Activated CD8-positive, alpha-beta T cell treated with anti-CD3 and anti-CD28 coated beads, Interleukin-2, amount 10 ng/mL, durations not matched to agents 7 days and 5 days (primary cell): ENCODE measurements at regions of chr1 and their contacts with region 1.

Region 1: DNA sequence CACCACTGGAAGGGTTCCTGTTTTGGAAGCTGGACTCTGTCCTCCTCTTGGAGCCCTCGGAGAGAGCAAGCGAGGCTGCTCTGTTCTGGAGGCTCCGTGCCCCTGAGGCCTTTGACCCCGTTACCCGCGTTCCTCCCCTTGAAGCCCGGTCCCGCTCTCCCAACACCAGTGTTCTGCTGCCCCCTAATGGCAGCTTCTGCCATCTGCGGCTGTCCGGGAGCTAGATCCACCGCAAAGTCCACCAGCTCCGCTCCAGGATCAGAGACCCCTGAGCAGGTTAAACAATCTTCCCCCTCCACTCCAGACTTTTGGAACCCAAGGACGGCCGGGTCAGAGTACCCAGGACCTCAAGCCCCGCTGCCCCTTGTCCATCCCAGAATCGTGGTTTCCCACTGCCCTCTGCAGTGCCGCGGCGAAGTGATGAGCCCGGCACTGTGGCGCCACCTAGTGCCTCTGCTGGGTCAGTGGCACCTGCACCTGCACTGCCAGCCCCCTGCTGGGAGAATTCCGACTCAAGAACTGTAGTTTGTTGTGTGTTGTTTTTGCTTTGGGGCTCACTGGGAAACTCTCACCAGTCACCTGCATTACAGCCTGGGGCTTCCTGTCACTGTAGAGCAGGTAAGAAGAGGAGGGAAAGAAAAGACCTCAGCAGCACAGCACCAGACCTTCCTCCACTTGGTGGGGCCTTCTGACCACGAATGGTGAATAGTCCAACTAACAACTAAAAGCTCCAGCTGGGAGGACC is 63.5 kb upstream of the NFASC start:
- DNase-seq: peak; percentile 90
- ATAC-seq: peak; percentile 96
- H3K4me3 Mint-ChIP-seq: peak overlapping the region; percentile 78
- H3K27ac Mint-ChIP-seq: peak overlapping the region; percentile 88
- H3K4me1 Mint-ChIP-seq: peaks cover 25% of the 10 kb centered on the region
- H3K27me3 Mint-ChIP-seq: peaks cover 11% of the 10 kb centered on the region

Region 2: GRCh38 chr1:204506961-204507387 is 300.1 kb before region 1 on chr1:
- CTCF ChIA-PET with region 1: interaction called, 43 read pairs
- POLR2A ChIA-PET with region 1: interaction called, 4 read pairs
- DNase-seq: peak; percentile 94
- ATAC-seq: peak; percentile 82
- H3K4me3 Mint-ChIP-seq: peak overlapping the region; percentile 88
- H3K27ac Mint-ChIP-seq: peak overlapping the region; percentile 97
- H3K4me1 Mint-ChIP-seq: peaks cover 42% of the 10 kb centered on the region
- H3K27me3 Mint-ChIP-seq: no peaks in the 10 kb centered on the region

Region 3: DNA sequence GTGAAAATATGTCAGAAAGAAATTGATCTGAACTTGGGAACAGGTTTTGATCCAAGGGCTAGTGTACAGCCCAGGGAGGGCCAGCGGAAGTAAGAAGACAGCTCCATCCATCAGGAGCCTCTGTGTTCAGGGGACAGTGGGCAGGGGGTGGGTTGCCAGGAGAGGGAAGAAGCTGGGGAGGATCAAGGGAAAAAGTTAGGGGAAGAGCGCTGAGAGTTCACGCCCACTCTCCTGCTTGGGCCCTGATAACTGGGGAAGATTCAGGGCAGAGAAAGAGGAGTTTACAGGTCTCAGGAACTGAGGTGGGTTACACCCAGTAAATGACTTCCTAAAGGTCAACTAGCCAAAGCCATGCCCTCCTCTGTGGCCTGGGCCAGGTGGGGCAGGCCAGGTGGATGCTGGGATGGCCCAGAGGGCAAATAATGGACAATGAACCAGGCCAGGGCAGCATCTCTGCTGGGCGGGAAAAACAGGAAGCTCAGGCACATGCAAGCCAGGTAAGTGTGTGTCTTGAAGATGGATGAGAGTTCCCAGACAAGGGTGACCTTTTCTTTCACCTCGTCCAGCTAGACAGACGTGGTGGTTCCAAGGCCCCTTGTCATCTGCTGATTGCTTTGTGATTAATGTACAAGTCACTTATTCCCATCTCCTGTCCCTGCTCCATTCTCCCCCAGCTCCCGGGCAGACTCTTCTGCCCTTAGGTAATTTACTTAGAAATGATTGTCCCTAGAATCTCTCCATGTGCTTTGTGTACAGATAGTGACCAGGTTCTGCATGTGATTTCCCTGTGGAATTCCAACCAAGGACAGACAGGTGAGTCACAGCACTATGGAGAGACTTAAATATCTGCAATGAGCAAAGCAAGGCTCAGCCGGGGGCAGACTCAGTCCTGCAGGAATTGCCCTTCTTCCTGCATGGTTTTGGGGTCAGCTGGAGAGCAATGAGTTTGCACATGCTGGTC is 233.9 kb before region 1 on chr1:
- CTCF ChIA-PET with region 1: interaction called, 175 read pairs
- POLR2A ChIA-PET with region 1: no interaction called
- DNase-seq: no peak
- ATAC-seq: no peak
- H3K4me3 Mint-ChIP-seq: no peak overlapping the region
- H3K27ac Mint-ChIP-seq: no peak overlapping the region
- H3K4me1 Mint-ChIP-seq: peaks cover 11% of the 10 kb centered on the region
- H3K27me3 Mint-ChIP-seq: no peaks in the 10 kb centered on the region

Region 4: DNA sequence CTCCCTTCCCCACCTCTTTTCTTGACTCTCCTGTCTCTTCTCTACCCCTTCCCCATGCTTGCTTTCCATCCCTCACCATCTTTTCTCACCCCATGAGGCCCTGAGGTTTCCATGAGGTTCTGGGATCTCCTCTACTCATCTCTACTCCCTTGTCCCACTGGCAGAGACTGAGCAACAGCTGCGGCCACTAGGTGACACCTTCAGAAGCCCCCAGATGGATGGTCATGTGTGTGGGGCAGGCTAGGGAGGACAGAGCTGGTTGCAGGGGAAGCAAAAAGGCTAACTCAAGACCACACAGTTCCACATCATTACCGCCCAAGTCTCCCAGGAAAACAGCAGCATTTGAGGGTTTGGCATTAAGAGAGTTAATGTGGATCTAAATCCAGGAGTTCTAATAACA is 166.5 kb before region 1 on chr1:
- CTCF ChIA-PET with region 1: interaction called, 16 read pairs
- POLR2A ChIA-PET with region 1: no interaction called
- DNase-seq: no peak
- ATAC-seq: no peak
- H3K4me3 Mint-ChIP-seq: no peak overlapping the region
- H3K27ac Mint-ChIP-seq: no peak overlapping the region
- H3K4me1 Mint-ChIP-seq: no peaks in the 10 kb centered on the region
- H3K27me3 Mint-ChIP-seq: no peaks in the 10 kb centered on the region

Region 5: DNA sequence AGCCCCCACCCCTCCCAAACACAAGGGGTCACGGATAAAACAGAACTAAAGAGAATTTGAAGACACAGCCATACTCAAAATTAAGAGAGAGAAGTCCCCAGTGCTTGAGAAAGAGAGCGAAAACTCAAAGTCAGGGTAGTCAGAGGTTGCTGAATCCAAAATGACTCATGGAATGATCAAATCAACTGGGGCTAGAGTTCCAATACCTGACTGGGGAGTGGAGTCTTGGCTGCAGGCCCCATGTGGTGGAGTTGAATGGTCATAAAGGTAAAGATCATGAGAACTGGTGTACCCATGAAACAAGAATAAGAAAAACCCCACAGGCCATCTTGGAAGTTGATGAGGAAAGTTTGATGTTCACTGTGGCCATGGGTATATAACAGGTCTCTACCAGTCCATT is 37.1 kb before region 1 on chr1:
- CTCF ChIA-PET with region 1: interaction called, 10 read pairs
- POLR2A ChIA-PET with region 1: no interaction called
- DNase-seq: no peak
- ATAC-seq: no peak
- H3K4me3 Mint-ChIP-seq: no peak overlapping the region
- H3K27ac Mint-ChIP-seq: no peak overlapping the region
- H3K4me1 Mint-ChIP-seq: no peaks in the 10 kb centered on the region
- H3K27me3 Mint-ChIP-seq: peaks cover 56% of the 10 kb centered on the region

Region 6: GRCh38 chr1:204941421-204942338 is 134.6 kb after region 1 on chr1:
- CTCF ChIA-PET with region 1: interaction called, 24 read pairs
- POLR2A ChIA-PET with region 1: no interaction called
- DNase-seq: peak; percentile 67
- ATAC-seq: peak; percentile 58
- H3K4me3 Mint-ChIP-seq: no peak overlapping the region
- H3K27ac Mint-ChIP-seq: no peak overlapping the region
- H3K4me1 Mint-ChIP-seq: peaks cover 6% of the 10 kb centered on the region
- H3K27me3 Mint-ChIP-seq: peaks cover 13% of the 10 kb centered on the region